Right cardiac atrium (tissue), 5 donors: ENCODE measurements at regions of chr16 and their contacts with region 1.

Region 1: DNA sequence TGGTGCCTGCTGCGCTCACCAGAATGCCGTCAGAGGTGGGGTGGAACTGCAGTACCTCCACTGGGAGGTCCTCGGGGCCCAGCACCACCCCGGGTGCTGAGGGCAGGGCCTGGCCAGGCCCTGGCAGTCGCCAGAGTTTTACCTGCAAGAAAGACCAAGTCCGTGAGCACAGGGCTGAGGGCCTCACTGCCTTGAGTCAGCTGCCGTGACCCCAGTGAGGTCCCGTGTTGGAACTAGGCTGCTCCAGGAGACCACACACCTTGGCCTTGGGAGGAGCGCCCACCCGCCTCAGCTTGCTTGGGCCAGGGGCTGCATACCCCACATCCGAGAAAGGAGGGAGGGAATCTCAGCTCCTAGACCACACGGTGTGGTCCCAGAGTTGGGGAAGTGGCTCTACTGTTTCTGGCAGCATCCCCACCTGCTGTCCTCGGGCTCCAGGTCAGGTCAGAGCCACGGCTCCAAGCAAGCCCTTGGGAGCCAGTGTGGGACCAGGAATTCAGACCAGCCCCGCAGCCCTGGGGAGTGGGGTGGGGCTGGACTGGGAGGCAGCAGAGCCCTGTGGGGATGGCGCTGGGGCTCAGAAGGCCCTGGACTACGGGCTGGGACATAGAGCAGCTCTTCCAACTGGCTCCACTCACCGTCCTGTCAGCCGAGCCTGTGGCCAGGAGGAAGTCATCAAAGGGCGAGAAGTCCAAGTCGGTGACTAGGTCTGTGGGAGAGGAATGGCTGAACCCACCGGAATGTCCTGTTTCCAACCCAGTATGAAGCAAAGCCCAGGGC is 8.7 kb downstream of the CORO7 start:
- DNase-seq: peak in 2 of 3 donors; percentile 61 to 70
- ATAC-seq: peak in 1 of 2 donors; percentile 5
- H3K4me3 ChIP-seq: no peak overlapping the region
- H3K27ac ChIP-seq: no peak overlapping the region
- H3K4me1 ChIP-seq: no peaks in the 10 kb centered on the region
- H3K27me3 ChIP-seq: no peaks in the 10 kb centered on the region

Region 2: DNA sequence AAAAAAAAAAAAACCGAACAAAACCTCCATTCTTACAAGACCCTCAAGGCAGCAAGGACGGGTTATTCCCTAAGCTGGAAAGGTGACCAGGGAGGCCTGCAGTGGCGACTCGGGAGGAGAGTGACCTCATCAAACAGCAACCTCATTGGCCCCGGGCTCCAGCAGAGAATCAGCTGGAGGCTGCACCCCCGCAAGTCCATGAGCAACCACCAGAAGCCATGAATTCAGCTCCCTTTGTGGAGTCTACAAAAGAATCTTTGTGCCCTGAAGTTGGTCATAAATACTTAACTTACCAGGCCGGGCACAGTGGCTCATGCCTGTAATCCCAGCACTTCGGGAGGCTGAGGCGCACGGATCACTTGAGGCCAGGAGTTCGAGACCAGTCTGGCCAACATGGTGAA is 446.3 kb before region 1 on chr16:
- intact Hi-C with region 1: no loop called
- DNase-seq: no peak
- ATAC-seq: no peak
- H3K4me3 ChIP-seq: no peak overlapping the region
- H3K27ac ChIP-seq: no peak overlapping the region
- H3K4me1 ChIP-seq: peaks cover 2% of the 10 kb centered on the region
- H3K27me3 ChIP-seq: no peaks in the 10 kb centered on the region

Region 3: DNA sequence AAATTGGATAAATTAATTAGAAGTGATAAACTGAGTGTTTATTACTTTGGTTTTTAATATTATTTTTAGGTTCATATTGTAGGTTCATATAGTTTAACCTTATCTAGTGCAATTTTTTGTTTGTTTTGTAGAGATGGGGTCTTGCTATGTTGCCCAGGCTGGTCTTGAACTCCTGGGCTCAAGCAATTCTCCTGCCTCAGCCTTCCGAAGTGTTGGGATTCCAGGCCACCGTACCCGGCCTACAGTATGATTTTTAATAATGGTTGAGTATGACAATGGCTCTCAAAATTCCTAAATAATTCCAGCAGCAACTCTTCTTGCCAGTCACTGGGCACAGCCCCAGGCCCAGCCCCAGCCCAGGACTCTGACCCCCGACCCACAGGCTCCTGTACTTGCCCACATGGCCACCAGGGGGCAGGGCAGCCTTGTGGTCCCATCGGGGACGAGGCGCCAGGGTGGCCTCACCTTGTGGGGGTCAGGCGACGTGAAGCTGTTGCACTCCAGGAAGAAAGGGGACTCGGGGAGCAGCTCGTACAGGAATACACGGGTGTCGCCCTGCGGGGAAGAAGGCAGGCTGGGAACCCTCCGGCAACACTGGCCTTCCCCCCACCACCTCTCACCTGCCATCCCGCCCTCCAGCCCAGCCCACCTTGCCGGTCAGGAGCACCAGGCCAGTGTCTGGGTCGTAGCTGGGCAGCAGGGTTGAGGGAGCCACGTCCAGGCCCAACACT is 48.7 kb before region 1 on chr16:
- intact Hi-C with region 1: loop called (anchors 1 to 2 kb)
- DNase-seq: peak; percentile 70 to 88 (median 88)
- ATAC-seq: peak; percentile 64
- H3K4me3 ChIP-seq: no peak overlapping the region
- H3K27ac ChIP-seq: no peak overlapping the region
- H3K4me1 ChIP-seq: no peaks in the 10 kb centered on the region
- H3K27me3 ChIP-seq: no peaks in the 10 kb centered on the region